Caco-2 (cell line): ENCODE measurements at regions of chr14 and their contacts with region 1.

Region 1: DNA sequence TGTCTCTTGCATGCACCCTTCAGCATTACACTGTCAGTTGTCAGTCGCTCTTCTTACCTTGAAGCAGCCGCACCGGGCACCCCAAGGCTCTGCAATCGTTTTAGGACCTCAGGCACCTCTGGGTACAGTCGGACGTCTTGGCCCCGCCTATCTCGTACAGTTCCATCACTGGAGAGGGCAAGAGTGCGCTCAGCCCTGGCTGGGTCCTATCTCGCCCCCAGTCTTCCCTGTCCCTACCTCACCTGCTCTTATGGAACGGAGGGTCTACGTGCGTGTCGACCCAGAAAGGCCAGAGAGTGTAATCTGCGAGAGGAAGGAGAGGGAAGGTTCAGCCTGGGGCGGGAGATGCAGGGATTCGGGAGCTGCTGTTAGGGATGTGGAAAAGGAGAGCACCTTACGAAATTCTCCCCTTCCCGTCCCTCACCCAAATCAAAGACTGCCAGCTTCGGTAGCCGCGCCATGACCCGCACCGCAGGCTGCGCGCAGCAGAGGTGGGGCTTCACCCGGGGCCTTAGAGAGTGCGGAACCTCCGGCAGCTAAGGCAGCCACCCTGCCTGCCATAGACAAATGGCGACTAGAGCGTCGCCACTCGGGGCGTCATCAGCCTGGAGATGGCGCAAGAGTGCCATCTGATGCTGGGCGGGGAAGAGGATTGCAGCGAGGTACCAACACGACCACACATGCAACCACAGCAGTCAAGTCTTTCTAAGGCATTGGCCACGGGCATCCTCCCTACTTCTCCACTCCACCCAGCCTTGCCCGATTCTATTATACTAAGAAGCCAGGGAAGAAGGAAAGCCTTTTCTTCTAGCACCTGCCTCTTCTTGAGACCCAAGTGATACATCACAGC is at the start of gene MDP1:
- DNase-seq: peak; percentile 82 to 85
- H3K4me3 ChIP-seq: peak within 1 kb of the TSS; percentile 70
- H3K4me3 Mint-ChIP-seq: peak within 1 kb of the TSS; percentile 87
- H3K27ac Mint-ChIP-seq: peak within 1 kb of the TSS; percentile 88
- H3K4me1 ChIP-seq: peaks cover 12% of the 10 kb centered on the region
- H3K4me1 Mint-ChIP-seq: peaks cover 13% of the 10 kb centered on the region
- H3K27me3 ChIP-seq: no peaks in the 10 kb centered on the region
- H3K27me3 Mint-ChIP-seq: no peaks in the 10 kb centered on the region
- CTCF ChIP-seq: peak; percentile 13 to 75
- total RNA-seq, gene MDP1: 19.6 and 20.5 TPM in 2 replicates

Region 2: DNA sequence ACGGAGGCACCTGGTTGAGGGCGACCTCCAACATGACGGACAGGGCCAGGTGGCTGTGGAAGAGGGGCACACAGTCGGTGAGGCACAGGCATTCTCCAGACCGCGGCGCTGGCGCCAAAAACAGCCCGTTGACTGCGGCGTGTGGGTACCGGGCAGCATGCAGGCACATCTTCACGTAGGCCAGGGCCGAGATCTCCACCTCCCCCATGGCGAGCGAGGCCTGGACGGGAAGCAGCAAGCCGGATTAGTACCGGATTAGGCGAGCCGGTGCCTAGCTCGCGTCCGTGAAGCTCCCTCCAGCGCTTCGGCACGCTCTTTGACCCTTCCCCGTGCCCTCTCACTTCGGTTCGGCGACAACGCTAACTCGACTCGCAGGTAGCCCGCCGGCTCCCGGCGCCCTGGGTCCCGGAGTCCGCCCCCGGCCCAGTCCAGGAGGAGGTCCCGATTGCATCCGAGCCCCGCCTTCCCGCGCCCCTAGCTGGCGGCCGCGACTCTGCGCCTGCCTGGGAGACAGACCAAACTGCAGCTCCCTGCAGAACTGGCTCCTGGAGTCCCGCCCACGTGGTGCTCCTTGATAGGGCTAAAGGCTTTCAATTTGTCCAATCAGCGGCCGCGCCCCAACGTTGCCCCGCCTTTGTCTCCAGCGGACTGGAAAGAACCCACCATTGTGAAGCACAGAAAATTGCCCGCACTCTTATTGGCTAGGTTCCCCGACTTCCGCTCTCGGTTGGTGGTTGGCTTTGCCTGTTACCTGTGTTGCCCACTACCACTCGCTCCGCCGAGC is 74.4 kb before region 1 on chr14 and contains the start of gene EMC9:
- CTCF ChIA-PET with region 1: no interaction called
- POLR2A ChIA-PET with region 1: interaction called, 6 read pairs
- intact Hi-C with region 1: loop called (anchors 2 kb)
- DNase-seq: peak; percentile 99 to 100
- H3K4me3 ChIP-seq: peak within 1 kb of the TSS; percentile 84
- H3K4me3 Mint-ChIP-seq: peak within 1 kb of the TSS; percentile 99
- H3K27ac Mint-ChIP-seq: peak within 1 kb of the TSS; percentile 88
- H3K4me1 ChIP-seq: no peaks in the 10 kb centered on the region; the same call in 1 of the 2 replicates
- H3K4me1 Mint-ChIP-seq: peaks cover 43% of the 10 kb centered on the region
- H3K27me3 ChIP-seq: no peaks in the 10 kb centered on the region
- H3K27me3 Mint-ChIP-seq: no peaks in the 10 kb centered on the region
- CTCF ChIP-seq: peak; percentile 13 to 50
- total RNA-seq, gene EMC9: 31.1 and 32.4 TPM in 2 replicates

Region 3: GRCh38 chr14:24195191-24196070 is 20.3 kb before region 1 on chr14 and contains the start of gene TM9SF1:
- CTCF ChIA-PET with region 1: interaction called, 4 read pairs
- POLR2A ChIA-PET with region 1: interaction called, 28 read pairs
- intact Hi-C with region 1: loop called (anchors 1 kb)
- DNase-seq: peak; percentile 88 to 90
- H3K4me3 ChIP-seq: peak within 1 kb of the TSS; percentile 95
- H3K4me3 Mint-ChIP-seq: peak within 1 kb of the TSS; percentile 84
- H3K27ac Mint-ChIP-seq: peak within 1 kb of the TSS; percentile 88
- H3K4me1 ChIP-seq: 0 out of 2 replicates have a peak, but pooled peaks cover 9% of the 10 kb centered on the region
- H3K4me1 Mint-ChIP-seq: peaks cover 11% of the 10 kb centered on the region
- H3K27me3 ChIP-seq: no peaks in the 10 kb centered on the region
- H3K27me3 Mint-ChIP-seq: no peaks in the 10 kb centered on the region
- CTCF ChIP-seq: no peak
- total RNA-seq, gene TM9SF1: 41.9 and 47.1 TPM in 2 replicates

Region 4: DNA sequence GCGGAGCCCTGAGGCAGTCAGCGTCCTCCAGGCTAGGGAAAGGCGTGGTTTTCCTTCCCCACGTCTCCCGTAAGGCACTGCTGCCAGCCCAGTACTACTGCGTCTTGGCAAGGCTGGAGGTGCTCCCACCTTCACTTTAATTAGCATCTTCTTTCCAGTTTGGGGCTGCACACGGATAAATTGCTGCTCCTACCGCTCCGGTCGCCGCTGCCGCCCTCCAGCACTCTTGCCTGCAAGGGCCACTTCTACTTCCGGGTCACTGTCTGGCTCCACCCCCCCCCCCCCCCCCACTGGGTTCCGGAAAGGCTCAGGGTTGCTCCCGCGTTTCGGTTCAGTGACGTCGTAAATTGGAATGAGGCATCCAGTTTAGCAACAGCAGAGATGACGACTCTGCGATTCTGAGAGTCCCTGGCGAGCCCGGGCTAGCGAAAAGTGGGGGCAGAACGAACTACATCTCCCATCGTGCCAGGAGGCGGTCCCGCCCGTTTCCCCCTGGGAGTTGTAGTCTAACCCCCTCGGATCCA is 16.5 kb after region 1 on chr14 and contains the start of gene NEDD8:
- CTCF ChIA-PET with region 1: no interaction called
- POLR2A ChIA-PET with region 1: interaction called, 9 read pairs
- intact Hi-C with region 1: loop called (anchors 1 kb)
- DNase-seq: peak; percentile 93 to 94
- H3K4me3 ChIP-seq: peak within 1 kb of the TSS; percentile 76
- H3K4me3 Mint-ChIP-seq: peak within 1 kb of the TSS; percentile 81
- H3K27ac Mint-ChIP-seq: peak within 1 kb of the TSS; percentile 85
- H3K4me1 ChIP-seq: no peaks in the 10 kb centered on the region
- H3K4me1 Mint-ChIP-seq: peaks cover 4% of the 10 kb centered on the region
- H3K27me3 ChIP-seq: no peaks in the 10 kb centered on the region
- H3K27me3 Mint-ChIP-seq: no peaks in the 10 kb centered on the region
- CTCF ChIP-seq: no peak
- total RNA-seq, gene NEDD8: 210 and 218 TPM in 2 replicates

Region 5: GRCh38 chr14:24241829-24242443 is 26.2 kb after region 1 on chr14:
- CTCF ChIA-PET with region 1: interaction called, 10 read pairs
- POLR2A ChIA-PET with region 1: interaction called, 16 read pairs
- intact Hi-C with region 1: loop called (anchors 1 kb)
- DNase-seq: peak; percentile 95
- H3K4me3 ChIP-seq: peak overlapping the region; percentile 71
- H3K4me3 Mint-ChIP-seq: peak overlapping the region; percentile 74
- H3K27ac Mint-ChIP-seq: peak overlapping the region; percentile 91
- H3K4me1 ChIP-seq: no peaks in the 10 kb centered on the region
- H3K4me1 Mint-ChIP-seq: peaks cover 9% of the 10 kb centered on the region
- H3K27me3 ChIP-seq: no peaks in the 10 kb centered on the region
- H3K27me3 Mint-ChIP-seq: no peaks in the 10 kb centered on the region
- CTCF ChIP-seq: peak; percentile 49 to 58

Region 6: DNA sequence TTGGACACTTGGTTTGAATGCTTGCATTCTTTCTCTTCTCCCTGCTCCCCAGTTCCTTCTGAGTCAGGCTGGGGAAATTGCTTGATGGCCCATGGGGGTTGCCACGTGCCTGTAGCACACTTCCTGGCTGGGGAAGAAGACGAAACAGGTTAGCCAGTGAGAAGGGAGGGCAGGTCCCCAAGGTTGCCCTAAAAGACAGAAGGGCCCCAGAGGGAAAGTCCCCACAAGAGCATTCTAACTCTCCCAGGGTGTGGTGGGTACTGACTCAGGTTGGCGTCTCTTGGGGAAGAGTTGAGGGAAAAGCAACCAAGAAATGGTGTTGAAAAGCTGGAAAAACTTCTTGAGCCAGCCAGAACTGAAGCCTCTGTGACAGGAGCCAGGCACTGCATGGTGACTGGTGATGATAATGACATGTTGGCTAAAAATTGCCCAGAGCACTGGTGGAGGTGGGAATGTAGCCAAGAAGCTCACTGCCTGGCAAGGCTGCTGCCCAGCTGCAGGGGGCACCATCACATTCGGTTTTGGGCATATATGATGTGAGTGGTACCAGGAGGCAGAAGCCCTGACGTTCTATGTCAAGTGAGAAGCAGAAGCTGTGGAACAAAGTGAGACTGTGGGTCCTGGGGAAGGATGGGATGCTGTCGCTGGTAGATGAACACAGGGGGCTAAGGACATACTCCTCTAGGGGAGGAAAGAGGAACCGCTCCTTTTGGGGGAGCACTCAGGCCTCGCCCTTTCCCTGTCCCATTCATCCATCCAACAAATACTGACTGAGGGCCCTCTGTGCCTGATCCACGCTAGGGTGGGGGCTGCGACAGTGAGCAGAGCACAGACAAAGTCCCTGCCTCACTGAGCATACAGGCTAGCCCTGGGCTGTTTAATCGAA is 63.8 kb after region 1 on chr14:
- CTCF ChIA-PET with region 1: no interaction called
- POLR2A ChIA-PET with region 1: no interaction called
- intact Hi-C with region 1: no loop called
- DNase-seq: no peak
- H3K4me3 ChIP-seq: no peak overlapping the region
- H3K4me3 Mint-ChIP-seq: no peak overlapping the region
- H3K27ac Mint-ChIP-seq: no peak overlapping the region
- H3K4me1 ChIP-seq: no peaks in the 10 kb centered on the region
- H3K4me1 Mint-ChIP-seq: no peaks in the 10 kb centered on the region
- H3K27me3 ChIP-seq: no peaks in the 10 kb centered on the region
- H3K27me3 Mint-ChIP-seq: no peaks in the 10 kb centered on the region
- CTCF ChIP-seq: no peak

Region 7: GRCh38 chr14:24473211-24473610 is 257.5 kb after region 1 on chr14:
- CTCF ChIA-PET with region 1: no interaction called
- POLR2A ChIA-PET with region 1: no interaction called
- intact Hi-C with region 1: no loop called
- DNase-seq: no peak
- H3K4me3 ChIP-seq: no peak overlapping the region
- H3K4me3 Mint-ChIP-seq: no peak overlapping the region
- H3K27ac Mint-ChIP-seq: no peak overlapping the region
- H3K4me1 ChIP-seq: no peaks in the 10 kb centered on the region
- H3K4me1 Mint-ChIP-seq: no peaks in the 10 kb centered on the region
- H3K27me3 ChIP-seq: no peaks in the 10 kb centered on the region
- H3K27me3 Mint-ChIP-seq: no peaks in the 10 kb centered on the region
- CTCF ChIP-seq: no peak